Mammary epithelial cell (primary cell): ENCODE measurements at regions of chr1 and their contacts with region 1.

Region 1: GRCh38 chr1:3491291-3492246 is 37.1 kb downstream of the ARHGEF16 start:
- DNase-seq: peak; percentile 35
- H3K4me3 ChIP-seq: no peak overlapping the region
- H3K27ac ChIP-seq: no peak overlapping the region
- H3K4me1 ChIP-seq: peaks cover 8% of the 10 kb centered on the region
- H3K27me3 ChIP-seq: no peaks in the 10 kb centered on the region
- CTCF ChIP-seq: peak; percentile 65 to 93

Region 2: GRCh38 chr1:3504151-3504821 is 12.7 kb after region 1 on chr1:
- CTCF ChIA-PET with region 1: no interaction called
- dilution Hi-C with region 1: no loop called
- in situ Hi-C with region 1: no loop called
- intact Hi-C with region 1: no loop called
- DNase-seq: peak; percentile 51
- H3K4me3 ChIP-seq: no peak overlapping the region
- H3K27ac ChIP-seq: no peak overlapping the region
- H3K4me1 ChIP-seq: no peaks in the 10 kb centered on the region
- H3K27me3 ChIP-seq: peaks cover 5% of the 10 kb centered on the region
- CTCF ChIP-seq: no peak

Region 3: GRCh38 chr1:3564921-3565827 is 73.6 kb after region 1 on chr1:
- CTCF ChIA-PET with region 1: no interaction called
- dilution Hi-C with region 1: no loop called
- in situ Hi-C with region 1: no loop called
- intact Hi-C with region 1: loop called (anchors 5 kb)
- DNase-seq: no peak
- H3K4me3 ChIP-seq: no peak overlapping the region
- H3K27ac ChIP-seq: no peak overlapping the region
- H3K4me1 ChIP-seq: no peaks in the 10 kb centered on the region
- H3K27me3 ChIP-seq: no peaks in the 10 kb centered on the region
- CTCF ChIP-seq: peak; percentile 85 to 93

Region 4: DNA sequence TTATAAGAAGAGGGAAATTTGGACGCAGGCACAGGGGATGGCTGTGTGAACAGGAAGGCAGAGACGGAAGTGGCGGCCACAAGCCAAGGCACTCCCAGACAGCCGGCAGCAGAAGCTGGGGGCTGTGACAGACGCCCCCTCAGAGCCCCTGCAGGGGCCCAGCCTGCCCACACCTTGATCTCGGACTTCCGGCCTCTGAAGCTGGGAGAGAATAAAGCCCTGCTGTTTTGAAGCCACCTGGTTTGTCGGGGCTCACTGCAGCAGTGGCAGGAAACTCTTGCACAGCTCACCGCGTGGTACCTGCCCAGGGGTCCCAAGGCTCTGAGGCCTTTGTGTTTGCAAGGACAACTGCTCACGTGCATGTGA is 106.0 kb after region 1 on chr1:
- CTCF ChIA-PET with region 1: no interaction called
- dilution Hi-C with region 1: no loop called
- in situ Hi-C with region 1: no loop called
- intact Hi-C with region 1: no loop called
- DNase-seq: no peak
- H3K4me3 ChIP-seq: no peak overlapping the region
- H3K27ac ChIP-seq: no peak overlapping the region
- H3K4me1 ChIP-seq: peaks cover 14% of the 10 kb centered on the region
- H3K27me3 ChIP-seq: no peaks in the 10 kb centered on the region
- CTCF ChIP-seq: no peak

Region 5: DNA sequence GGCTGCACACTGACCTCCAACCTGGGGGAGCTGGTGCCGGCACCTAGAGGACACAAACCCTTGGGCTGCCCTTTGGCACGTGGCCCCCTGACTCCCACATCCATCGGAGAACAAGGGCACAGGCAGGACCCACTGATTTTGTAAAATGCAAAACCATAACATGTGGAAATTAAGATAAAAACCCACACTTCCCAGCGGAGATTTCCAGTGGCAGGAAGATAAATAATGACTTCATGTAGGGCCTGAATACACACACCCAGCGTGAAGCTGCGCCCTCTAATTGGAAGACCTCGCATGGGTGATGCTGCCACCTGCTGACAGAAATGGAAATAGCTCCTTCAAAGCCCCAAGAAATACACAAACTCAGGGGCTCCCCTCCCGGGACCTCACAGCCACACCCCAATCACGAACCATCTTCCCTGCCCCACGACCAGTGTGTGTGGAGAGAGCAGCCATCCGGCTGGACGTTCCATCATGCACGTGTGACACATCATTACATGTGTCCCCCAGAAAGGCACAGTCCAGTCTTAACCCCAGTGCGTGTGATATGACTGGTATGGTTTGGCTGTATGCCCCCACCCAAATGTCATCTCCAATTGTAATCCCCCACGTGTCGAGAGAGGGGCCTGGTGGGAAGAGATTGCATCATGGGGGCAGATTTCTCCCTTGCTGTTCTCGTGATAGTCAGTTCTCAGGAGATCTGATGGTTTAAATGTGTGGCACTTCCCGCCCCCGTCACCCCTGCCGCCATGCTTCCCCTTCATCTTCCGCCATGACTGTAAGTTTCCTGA is 127.5 kb after region 1 on chr1:
- CTCF ChIA-PET with region 1: interaction called, 10 read pairs
- dilution Hi-C with region 1: no loop called
- in situ Hi-C with region 1: loop called (anchors 5 to 10 kb)
- intact Hi-C with region 1: loop called (anchors 1 kb)
- DNase-seq: peak; percentile 48
- H3K4me3 ChIP-seq: no peak overlapping the region
- H3K27ac ChIP-seq: no peak overlapping the region
- H3K4me1 ChIP-seq: peaks cover 9% of the 10 kb centered on the region
- H3K27me3 ChIP-seq: no peaks in the 10 kb centered on the region
- CTCF ChIP-seq: peak; percentile 70 to 80